ENCODE measurements at regions of chr4 and their contacts with region 1.

Region 1: DNA sequence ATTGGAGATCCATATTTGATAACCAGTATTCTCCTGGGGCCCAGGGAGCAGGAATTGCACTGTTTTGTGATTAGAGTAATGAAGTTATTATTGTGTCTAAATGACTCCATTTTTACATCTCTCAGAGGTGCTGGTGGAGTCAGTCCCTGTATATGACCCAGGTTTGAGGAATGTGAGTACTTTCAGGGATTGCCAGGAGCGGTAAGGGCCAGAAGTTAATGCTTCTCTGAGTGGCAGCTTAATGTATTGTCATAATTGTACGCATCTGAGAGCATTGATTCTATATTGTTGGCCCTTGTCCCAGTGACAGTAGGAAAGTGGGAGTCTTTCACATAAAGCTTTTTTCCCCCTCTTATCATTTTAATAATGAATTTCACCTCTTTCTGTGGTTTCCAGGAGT is 146.2 kb downstream of the GATB start:
- DNase-seq: no peak
- H3K4me3 ChIP-seq: no peak overlapping the region
- H3K27ac ChIP-seq: no peak overlapping the region
- H3K4me1 ChIP-seq: no peaks in the 10 kb centered on the region
- H3K27me3 ChIP-seq: no peaks in the 10 kb centered on the region
- CTCF ChIP-seq: no peak

Region 2: GRCh38 chr4:151284534-151285245 is 329.9 kb before region 1 on chr4:
- CTCF ChIA-PET with region 1: interaction called, 19 read pairs
- POLR2A ChIA-PET with region 1: no interaction called
- intact Hi-C with region 1: no loop called
- DNase-seq: no peak
- H3K4me3 ChIP-seq: no peak overlapping the region
- H3K27ac ChIP-seq: no peak overlapping the region
- H3K4me1 ChIP-seq: no peaks in the 10 kb centered on the region
- H3K27me3 ChIP-seq: no peaks in the 10 kb centered on the region
- CTCF ChIP-seq: no peak

Region 3: DNA sequence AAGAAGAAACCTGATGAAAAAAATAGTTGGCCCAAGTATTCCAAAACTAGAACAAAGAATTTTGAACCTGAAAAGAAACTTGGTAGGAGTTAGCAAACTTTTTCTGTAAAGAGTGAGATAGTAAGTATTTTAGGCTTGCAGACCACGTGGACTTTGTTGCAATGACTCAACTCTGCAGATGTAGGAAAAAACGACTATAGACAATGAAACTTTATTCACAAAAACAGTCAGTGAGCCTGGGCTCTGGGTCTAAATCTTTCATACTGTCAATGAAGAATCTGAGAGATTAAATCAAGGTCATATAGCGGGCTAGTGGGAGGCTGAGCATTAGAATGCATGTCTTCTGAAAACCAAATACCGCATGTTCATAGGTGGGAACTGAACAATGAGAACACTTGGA is 312.1 kb before region 1 on chr4:
- CTCF ChIA-PET with region 1: no interaction called
- POLR2A ChIA-PET with region 1: interaction called, 10 read pairs
- intact Hi-C with region 1: no loop called
- DNase-seq: no peak
- H3K4me3 ChIP-seq: no peak overlapping the region
- H3K27ac ChIP-seq: no peak overlapping the region
- H3K4me1 ChIP-seq: no peaks in the 10 kb centered on the region
- H3K27me3 ChIP-seq: no peaks in the 10 kb centered on the region
- CTCF ChIP-seq: no peak